H1 (cell line): ENCODE measurements at regions of chr9 and their contacts with region 1.

Region 1: DNA sequence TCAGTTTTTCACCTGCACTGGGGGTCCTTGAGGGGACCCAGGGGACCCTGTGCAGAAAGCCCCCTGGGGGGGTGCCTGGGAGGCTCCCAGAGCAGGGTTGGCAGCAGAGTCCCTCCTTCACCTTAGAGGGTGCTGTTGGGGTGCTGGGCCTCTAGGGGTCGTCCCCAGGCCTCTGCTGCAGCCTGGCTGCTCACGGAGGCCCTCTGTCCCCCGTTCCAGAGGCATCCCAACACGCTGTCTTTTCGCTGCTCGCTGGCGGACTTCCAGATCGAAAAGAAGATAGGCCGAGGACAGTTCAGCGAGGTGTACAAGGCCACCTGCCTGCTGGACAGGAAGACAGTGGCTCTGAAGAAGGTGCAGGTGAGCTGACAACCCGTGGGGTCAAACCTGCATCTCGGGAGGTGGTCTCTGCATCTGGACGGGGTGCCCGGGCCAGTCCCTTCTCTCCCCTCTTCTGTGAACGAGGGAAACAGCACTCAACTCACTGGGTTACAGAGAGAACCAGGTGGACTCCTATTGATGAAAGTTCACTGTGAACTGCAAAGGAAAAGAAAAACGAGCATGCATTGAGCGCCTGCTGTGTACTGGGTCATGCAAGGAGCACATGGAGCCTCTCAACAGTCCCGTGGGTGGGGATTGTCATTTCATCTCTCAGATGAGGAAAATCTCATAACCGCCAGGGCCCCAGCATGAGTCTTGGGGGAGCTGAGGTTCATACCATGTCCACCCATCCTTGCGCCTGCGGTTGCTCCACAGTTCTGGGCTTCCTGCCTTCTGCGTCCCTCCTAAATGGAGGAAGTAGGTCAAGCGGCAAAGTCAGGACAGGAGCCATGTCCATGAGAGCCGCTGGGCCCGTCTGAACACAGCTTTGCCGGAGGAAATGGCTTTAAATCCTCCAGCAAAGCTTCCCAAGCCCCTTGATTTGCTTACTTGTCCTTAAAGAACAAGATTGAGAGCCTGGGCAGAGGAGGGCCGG is 54.8 kb downstream of the NEK6 start:
- DNase-seq: no peak
- H3K4me3 ChIP-seq: no peak overlapping the region
- H3K27ac ChIP-seq: no peak overlapping the region
- H3K4me1 ChIP-seq: peaks cover 0 to 9% (median 3%) of the 10 kb centered on the region in 4 experiments; a peak in 3 of 7 replicates
- H3K27me3 ChIP-seq: no peaks in the 10 kb centered on the region
- CTCF ChIP-seq: peak; percentile 67 to 82 (median 67)
- EP300 ChIP-seq: no peak
- POLR2A ChIP-seq: no peak
- RAD21 ChIP-seq: peak; percentile 42 to 64

Region 2: GRCh38 chr9:124330011-124330697 is 17.6 kb after region 1 on chr9:
- CTCF ChIA-PET with region 1: interaction called, 13 read pairs
- POLR2A ChIA-PET with region 1: interaction called, 3 read pairs
- DNase-seq: no peak
- H3K4me3 ChIP-seq: no peak overlapping the region
- H3K27ac ChIP-seq: no peak overlapping the region
- H3K4me1 ChIP-seq: no peaks in the 10 kb centered on the region
- H3K27me3 ChIP-seq: no peaks in the 10 kb centered on the region
- CTCF ChIP-seq: no peak
- EP300 ChIP-seq: no peak
- POLR2A ChIP-seq: no peak
- RAD21 ChIP-seq: no peak